ENCODE measurements at regions of chr19 and their contacts with region 1.

Region 1: DNA sequence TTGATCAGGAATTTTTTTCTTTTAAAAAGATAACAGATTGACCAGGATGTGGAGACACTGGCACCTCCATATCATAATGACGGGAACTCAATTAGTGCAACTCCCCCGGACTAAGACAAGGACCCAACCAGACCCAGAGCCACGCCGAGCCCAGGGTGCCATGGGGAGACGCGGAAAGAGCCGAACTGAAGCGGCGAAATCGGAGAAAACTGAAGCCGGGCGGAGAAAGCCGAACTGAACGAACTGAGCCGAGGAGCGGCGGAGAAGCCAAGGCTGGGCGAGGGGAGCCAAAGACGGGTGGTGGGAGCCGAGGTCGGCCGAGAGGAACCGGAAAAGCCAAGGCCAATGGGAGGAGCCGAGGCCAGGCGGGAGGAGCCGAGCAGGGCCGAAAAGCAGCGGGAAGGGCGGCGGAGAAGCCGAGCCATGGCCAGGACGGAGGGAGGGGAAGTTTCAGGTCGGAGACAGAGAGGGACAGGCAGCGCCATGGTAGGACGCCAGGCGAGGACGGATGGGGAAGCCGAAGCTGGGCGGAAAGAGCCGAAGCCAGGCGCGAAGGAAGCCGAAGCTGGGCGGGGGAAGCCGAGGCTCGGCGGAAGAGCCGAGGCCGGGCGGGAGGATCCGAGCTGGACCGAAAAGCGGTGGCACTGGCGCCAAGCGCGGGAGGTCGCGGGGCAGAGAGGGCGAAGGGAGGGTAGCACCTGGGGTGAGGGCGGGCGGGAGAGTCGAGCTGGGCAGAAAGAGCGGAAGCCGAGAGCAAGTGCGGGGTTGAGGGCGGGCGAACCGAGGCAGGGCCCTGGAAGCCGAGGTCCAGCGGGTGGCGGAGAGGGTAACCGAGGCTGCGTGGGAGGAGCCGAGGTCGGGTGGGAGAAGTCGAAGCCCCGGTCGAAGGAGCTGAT is 29.4 kb downstream of the ZNF557 start:
- DNase-seq: peak; percentile 84
- H3K4me3 Mint-ChIP-seq: peak overlapping the region; percentile 80
- H3K27ac Mint-ChIP-seq: peak overlapping the region; percentile 78
- H3K4me1 Mint-ChIP-seq: peaks cover 32% of the 10 kb centered on the region
- H3K27me3 Mint-ChIP-seq: peaks cover 8% of the 10 kb centered on the region

Region 2: GRCh38 chr19:6947745-6948144 is 151.2 kb before region 1 on chr19:
- CTCF ChIA-PET with region 1: no interaction called
- POLR2A ChIA-PET with region 1: no interaction called
- DNase-seq: peak; percentile 68
- H3K4me3 Mint-ChIP-seq: no peak overlapping the region
- H3K27ac Mint-ChIP-seq: peak overlapping the region; percentile 50
- H3K4me1 Mint-ChIP-seq: peaks cover 25% of the 10 kb centered on the region
- H3K27me3 Mint-ChIP-seq: no peaks in the 10 kb centered on the region

Region 3: DNA sequence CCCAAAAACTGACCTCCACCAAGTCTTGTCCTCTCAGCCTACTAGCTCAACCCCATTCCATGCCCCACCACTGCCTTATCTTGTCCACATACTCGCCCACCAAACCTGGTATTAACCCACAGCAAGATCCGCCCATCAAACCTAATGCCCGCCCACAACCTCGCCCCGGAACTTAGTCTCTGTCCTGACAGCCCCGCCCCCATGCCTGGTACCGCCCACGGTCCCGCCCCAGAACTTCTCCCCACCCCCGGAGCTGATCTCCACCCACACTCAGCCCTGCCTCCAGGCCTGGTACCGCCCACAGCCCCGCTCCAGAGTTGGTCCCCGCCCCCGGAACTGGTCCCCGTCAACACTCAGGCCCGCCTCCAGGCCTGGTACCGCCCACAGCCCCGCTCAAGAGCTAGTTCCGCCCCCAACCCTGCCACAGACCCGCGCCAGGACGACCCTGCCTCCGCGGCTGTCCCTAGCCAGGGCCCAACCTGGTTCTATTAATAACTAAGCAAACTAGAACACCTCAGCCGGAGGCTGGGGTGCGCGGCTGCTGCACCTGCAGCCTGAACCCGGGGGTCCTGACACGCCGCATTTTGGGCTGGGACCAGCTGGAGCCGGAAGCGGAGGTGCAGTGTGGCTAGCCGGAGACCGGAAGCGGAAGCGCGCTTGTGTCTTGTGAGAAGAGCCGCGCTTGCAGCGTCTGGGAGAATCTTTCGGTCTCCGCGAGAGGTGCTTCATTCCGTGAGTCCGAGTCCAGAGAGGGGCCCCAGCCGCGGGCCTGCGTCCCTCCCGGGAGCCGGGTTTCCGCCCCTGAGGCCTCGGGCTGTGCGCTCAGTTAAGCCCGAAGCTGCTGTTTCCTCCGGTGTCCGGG is 29.7 kb before region 1 on chr19 and contains the start of gene ZNF557:
- CTCF ChIA-PET with region 1: interaction called, 12 read pairs
- POLR2A ChIA-PET with region 1: interaction called, 38 read pairs
- DNase-seq: peak; percentile 99
- H3K4me3 Mint-ChIP-seq: peak within 1 kb of the TSS; percentile 96
- H3K27ac Mint-ChIP-seq: peak within 1 kb of the TSS; percentile 91
- H3K4me1 Mint-ChIP-seq: peaks cover 24% of the 10 kb centered on the region
- H3K27me3 Mint-ChIP-seq: no peaks in the 10 kb centered on the region
- total RNA-seq, gene ZNF557: 12.9 to 13.4 TPM

Region 4: DNA sequence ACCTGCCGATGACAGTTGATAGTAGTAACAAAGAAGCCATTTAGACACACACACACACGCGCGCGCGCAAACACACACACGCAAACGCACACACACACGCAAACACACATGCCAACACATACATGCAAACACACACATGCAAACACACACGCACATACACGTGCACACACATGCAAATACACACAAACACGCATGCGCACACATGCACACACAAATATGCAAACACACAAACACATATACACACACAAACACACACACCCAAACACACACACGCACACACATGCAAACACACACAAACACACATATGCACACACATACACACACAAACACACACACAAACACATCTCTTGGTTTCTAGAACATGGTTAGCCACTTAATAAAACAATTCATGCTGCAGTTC is 20.6 kb after region 1 on chr19:
- CTCF ChIA-PET with region 1: no interaction called
- POLR2A ChIA-PET with region 1: no interaction called
- DNase-seq: no peak
- H3K4me3 Mint-ChIP-seq: no peak overlapping the region
- H3K27ac Mint-ChIP-seq: no peak overlapping the region
- H3K4me1 Mint-ChIP-seq: no peaks in the 10 kb centered on the region
- H3K27me3 Mint-ChIP-seq: no peaks in the 10 kb centered on the region

Region 5: DNA sequence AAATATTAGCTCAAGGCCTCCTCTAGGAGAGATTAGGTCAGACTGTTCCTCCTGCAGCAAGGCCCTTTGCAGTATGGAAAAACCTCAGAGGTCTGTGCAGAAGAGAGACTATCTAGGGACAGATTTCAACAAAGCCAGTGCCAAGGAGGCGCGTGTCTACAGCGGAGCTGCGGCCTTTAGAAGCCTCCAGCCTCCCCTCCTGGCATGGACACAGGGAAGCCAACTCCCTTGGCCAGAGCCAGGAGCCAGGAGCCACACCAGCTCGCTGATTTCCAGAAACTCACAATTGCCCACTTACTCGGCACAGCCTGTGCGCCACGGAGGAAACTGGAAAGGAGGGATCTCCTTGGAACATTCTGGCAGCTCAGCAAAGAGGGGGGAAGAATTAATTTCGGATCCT is 131.9 kb after region 1 on chr19:
- CTCF ChIA-PET with region 1: no interaction called
- POLR2A ChIA-PET with region 1: no interaction called
- DNase-seq: no peak
- H3K4me3 Mint-ChIP-seq: no peak overlapping the region
- H3K27ac Mint-ChIP-seq: no peak overlapping the region
- H3K4me1 Mint-ChIP-seq: no peaks in the 10 kb centered on the region
- H3K27me3 Mint-ChIP-seq: no peaks in the 10 kb centered on the region

Region 6: DNA sequence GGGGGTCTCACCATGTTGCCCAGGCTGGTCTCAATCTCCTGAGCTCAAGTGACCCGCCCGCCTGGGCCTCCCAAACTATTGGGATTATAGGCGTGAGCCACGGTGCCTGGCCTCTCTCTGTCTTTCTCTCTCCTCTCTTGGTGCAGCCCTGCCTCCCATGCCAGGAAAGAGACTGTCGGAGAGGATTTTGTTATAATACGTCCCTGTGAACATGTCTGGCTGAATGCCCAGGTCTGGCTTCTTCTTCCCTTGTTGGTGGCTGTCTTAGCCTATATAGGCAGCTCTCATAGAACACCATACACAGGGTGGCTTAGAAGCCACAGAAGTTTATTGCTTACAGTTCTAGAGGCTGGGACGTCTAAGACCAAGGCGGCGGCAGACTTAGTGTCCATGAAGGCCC is 343.5 kb after region 1 on chr19:
- CTCF ChIA-PET with region 1: no interaction called
- POLR2A ChIA-PET with region 1: no interaction called
- DNase-seq: no peak
- H3K4me3 Mint-ChIP-seq: no peak overlapping the region
- H3K27ac Mint-ChIP-seq: no peak overlapping the region
- H3K4me1 Mint-ChIP-seq: no peaks in the 10 kb centered on the region
- H3K27me3 Mint-ChIP-seq: no peaks in the 10 kb centered on the region

Measured in activated CD4-positive, alpha-beta memory T cell treated with anti-CD3 and anti-CD28 coated beads, Interleukin-2, amount 10 ng/mL, durations not matched to agents 7 days and 5 days (primary cell).